HepG2 (cell line): ENCODE measurements at regions of chr11 and their contacts with region 1.

Region 1: DNA sequence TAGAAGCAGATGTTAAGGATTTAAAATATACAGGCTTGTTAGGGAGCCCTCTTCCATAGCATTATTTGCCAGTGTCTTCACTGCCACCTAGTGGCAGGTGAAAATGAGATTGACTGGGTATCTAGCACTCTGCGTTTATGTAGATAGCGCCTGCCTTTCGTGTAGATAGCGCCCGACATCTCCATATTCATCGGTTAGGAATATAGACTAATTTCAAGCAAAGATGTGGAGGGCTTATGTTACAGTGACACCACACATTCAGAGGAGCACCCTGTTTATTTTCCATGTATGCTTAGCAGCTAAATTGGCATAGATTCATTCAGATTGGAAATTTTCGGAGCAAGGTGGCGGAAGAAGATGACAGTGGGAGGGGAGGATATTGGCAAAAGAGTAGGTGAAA is 72.0 kb downstream of the SLC5A12 start:
- DNase-seq: peak; percentile 65
- ATAC-seq: peak; percentile 98
- H3K4me3 ChIP-seq: no peak overlapping the region
- H3K27ac ChIP-seq: no peak overlapping the region
- H3K4me1 ChIP-seq: no peaks in the 10 kb centered on the region
- H3K27me3 ChIP-seq: no peaks in the 10 kb centered on the region; a peak in 1 of 5 replicates
- CTCF ChIP-seq: peak; percentile 80
- EP300 ChIP-seq: no peak
- POLR2A ChIP-seq: no peak
- RAD21 ChIP-seq: peak; percentile 25; the same call in 1 of the 2 replicates

Region 2: GRCh38 chr11:26286472-26287066 is 363.3 kb before region 1 on chr11:
- CTCF ChIA-PET with region 1: interaction called, 11 read pairs
- POLR2A ChIA-PET with region 1: no interaction called
- in situ Hi-C with region 1: loop called (anchors 10 kb)
- intact Hi-C with region 1: no loop called
- DNase-seq: peak; percentile 2
- ATAC-seq: peak; percentile 89
- H3K4me3 ChIP-seq: no peak overlapping the region
- H3K27ac ChIP-seq: no peak overlapping the region
- H3K4me1 ChIP-seq: no peaks in the 10 kb centered on the region
- H3K27me3 ChIP-seq: no peaks in the 10 kb centered on the region
- CTCF ChIP-seq: peak; percentile 52
- EP300 ChIP-seq: no peak
- POLR2A ChIP-seq: no peak
- RAD21 ChIP-seq: no peak

Region 3: DNA sequence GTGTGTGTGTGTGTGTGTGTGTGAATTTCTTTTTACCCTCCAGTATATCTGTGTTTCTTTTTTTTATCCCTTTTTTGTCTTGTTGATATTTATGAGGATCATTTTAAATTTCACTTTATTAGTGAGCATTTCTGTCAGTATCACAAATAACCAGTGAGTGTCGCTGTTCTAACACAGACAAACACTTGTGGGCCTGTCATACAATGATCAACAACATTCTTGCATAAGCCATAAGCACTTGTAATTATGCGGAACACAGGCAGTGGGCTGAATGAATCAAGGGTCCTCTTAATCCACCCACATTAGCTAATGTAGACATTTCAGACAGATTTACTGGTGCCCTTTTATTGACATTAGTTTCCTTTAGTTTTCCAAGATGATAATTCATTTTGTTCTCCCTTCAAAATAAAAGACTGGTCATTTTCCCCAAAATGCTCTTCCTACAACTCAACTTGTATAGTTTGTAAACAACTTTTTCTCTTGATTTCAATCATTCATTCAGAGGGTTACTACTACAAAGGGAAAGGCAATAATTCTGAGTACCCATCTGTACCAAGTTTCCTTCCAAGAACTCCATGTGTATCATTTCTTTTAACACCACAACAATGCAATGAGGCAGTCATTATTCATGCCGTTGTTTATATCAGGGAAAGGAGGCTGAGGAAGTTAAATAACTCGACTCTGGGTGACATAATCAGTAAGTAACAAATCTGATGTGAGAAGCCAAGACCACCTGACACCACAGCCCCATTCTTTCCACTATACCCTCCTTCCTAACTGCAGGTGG is 352.5 kb before region 1 on chr11:
- CTCF ChIA-PET with region 1: interaction called, 12 read pairs
- POLR2A ChIA-PET with region 1: no interaction called
- in situ Hi-C with region 1: loop called (anchors 10 kb)
- intact Hi-C with region 1: loop called (anchors 1 kb)
- DNase-seq: peak; percentile 58
- ATAC-seq: peak; percentile 80
- H3K4me3 ChIP-seq: no peak overlapping the region
- H3K27ac ChIP-seq: no peak overlapping the region
- H3K4me1 ChIP-seq: no peaks in the 10 kb centered on the region
- H3K27me3 ChIP-seq: no peaks in the 10 kb centered on the region
- CTCF ChIP-seq: peak; percentile 72
- EP300 ChIP-seq: no peak
- POLR2A ChIP-seq: no peak
- RAD21 ChIP-seq: no peak

Region 4: DNA sequence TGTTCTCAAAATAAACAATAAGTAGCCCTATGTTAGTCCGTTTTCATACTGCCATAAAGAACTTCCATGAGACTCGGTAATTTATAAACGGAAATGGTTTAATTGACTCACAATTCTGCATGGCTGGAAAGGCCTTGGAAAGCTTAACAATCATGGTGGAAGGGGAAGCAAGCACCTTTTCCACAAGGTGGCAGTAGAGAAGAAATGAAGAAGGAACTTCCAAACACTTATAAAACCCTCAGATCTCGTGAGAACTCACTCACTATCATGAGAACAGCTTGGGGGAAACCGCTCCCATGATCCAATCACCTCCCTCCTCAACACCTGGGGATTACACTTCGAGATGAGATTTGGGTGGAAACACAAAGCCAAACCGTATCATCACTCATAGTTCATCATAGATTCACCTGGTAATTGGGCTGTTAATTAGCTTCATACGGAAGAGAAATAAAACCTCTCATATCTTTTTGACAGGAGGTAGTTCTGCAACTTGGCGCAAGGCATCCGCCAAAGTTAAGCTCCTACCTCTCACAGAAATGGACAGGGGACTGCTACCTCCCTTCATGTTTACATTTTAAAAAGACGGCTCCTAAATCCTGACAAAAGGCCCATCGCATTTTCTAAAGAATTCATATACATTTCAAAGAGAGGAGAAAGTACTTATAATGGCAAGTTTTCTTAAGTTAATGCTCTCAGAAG is 126.8 kb before region 1 on chr11:
- CTCF ChIA-PET with region 1: interaction called, 3 read pairs
- POLR2A ChIA-PET with region 1: no interaction called
- in situ Hi-C with region 1: no loop called
- intact Hi-C with region 1: loop called (anchors 1 kb)
- DNase-seq: peak; percentile 32
- ATAC-seq: peak; percentile 36; the same call in 1 of the 3 replicates
- H3K4me3 ChIP-seq: no peak overlapping the region
- H3K27ac ChIP-seq: no peak overlapping the region
- H3K4me1 ChIP-seq: no peaks in the 10 kb centered on the region
- H3K27me3 ChIP-seq: no peaks in the 10 kb centered on the region
- CTCF ChIP-seq: peak; percentile 43
- EP300 ChIP-seq: no peak
- POLR2A ChIP-seq: no peak
- RAD21 ChIP-seq: no peak